Activated B cell treated with CpG ODN at 0.5 μM for 24 hours (primary cell): ENCODE measurements at regions of chr21 and their contacts with region 1.

Region 1: DNA sequence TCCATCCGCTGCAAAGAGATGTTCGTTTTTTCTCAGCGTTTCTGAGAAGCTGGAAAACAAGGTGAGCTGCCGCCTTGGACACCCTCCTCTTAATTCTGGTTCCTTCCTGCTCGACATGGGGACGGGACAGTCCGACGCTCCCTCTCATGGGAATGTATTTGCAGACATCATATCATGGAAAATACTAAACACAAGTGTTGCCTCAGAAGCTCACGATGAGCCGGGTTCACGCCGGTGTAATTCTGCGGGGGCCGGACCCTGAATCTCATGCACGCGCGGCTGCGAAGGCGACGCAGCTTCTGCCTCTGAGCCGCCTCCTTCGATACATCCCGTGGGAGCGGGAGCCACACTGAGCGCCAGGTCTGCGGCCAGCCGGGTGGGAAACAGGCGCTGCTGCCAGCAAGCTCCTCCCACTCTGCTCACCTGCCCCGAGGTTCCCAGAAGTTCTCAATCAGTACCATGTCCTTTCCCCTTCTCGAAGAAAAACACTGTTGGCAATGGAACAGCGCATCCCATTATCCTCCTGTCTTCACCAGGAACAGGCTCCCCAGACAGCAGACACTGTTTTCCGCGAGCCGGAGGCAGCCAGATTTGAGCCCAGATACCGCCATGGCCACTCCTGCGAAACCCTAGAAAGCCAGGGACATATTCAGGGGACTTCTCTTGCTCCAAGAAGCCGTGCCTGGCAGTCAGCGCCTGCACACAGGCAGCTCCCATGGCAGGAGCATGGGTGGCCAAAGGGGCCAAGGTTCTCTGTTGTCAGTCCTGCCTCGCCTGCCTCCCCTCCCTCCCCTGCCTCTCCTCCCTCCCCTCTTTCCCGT is 98.0 kb downstream of the WDR4 start:
- DNase-seq: no peak
- ATAC-seq: no peak
- H3K4me3 Mint-ChIP-seq: no peak overlapping the region
- H3K27ac Mint-ChIP-seq: no peak overlapping the region
- H3K4me1 Mint-ChIP-seq: peaks cover 51% of the 10 kb centered on the region
- H3K27me3 Mint-ChIP-seq: peaks cover 21% of the 10 kb centered on the region
- CTCF ChIP-seq: no peak

Region 2: DNA sequence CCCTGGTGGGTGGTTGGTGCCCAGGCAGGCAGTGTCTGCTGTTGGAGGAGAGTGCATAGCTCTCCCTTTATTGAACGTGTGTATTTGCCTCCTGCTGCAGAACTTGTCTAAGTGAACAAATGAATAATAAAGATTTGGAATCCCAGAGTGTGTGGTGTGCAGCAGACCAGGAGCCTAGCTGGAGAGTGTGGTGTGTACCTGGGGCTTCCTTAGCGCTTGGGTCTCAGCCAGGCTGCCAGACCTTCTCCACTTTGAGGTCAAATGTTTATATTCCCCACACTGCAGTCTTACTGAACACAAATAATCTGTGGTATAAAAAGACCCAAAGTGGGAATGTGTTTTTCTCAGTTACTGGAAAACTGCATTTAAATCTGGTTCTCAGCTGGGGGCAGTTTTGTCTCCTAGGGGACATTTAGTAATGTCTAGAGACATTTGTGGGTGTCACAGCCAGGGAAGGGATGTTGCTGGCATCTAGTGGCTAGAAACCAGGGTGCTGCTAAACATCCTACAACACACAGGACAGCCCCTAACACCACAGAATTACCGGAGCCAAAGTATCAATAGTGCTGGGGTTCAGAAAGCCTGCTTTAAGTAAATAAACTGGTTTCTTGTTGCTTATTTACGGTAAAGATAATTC is 244.1 kb before region 1 on chr21:
- CTCF ChIA-PET with region 1: no interaction called
- POLR2A ChIA-PET with region 1: no interaction called
- intact Hi-C with region 1: no loop called
- DNase-seq: no peak
- ATAC-seq: no peak
- H3K4me3 Mint-ChIP-seq: peak overlapping the region; percentile 24
- H3K27ac Mint-ChIP-seq: peak overlapping the region; percentile 90
- H3K4me1 Mint-ChIP-seq: peaks cover 56% of the 10 kb centered on the region
- H3K27me3 Mint-ChIP-seq: no peaks in the 10 kb centered on the region
- CTCF ChIP-seq: no peak

Region 3: DNA sequence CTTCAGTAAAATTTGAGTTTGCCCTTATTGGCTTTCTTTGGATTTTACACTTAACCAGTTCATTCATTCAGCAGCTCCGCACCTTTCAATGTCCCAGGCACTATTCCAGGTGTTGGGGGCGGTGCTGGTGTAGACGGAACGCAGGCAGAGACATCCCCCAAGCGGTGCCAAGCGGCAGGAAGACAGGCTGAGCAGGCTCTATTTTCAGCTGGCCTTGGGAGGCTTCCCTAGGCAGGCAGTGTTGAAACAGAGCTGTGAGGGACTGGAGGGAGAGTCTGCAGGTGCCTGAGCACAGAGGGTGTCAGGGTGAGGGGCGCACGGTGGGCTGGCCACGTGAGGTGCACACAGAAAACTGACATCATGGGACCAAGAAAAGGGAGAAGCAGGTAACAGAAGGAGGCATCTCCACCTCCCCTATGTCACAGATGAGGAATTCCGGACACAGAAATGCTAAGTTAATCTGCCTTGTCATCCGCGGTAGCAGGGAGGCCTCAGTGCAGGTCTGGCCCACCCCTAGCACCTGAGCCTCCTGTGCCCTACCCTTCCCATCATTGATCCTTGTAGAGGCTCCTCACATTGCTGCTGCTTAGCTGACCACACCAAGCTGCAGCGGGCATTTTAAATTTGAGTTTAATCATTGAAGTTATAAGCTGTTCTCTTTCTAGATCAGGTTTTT is 226.9 kb before region 1 on chr21:
- CTCF ChIA-PET with region 1: no interaction called
- POLR2A ChIA-PET with region 1: no interaction called
- intact Hi-C with region 1: no loop called
- DNase-seq: no peak
- ATAC-seq: no peak
- H3K4me3 Mint-ChIP-seq: no peak overlapping the region
- H3K27ac Mint-ChIP-seq: no peak overlapping the region
- H3K4me1 Mint-ChIP-seq: peaks cover 9% of the 10 kb centered on the region
- H3K27me3 Mint-ChIP-seq: no peaks in the 10 kb centered on the region
- CTCF ChIP-seq: no peak

Region 4: DNA sequence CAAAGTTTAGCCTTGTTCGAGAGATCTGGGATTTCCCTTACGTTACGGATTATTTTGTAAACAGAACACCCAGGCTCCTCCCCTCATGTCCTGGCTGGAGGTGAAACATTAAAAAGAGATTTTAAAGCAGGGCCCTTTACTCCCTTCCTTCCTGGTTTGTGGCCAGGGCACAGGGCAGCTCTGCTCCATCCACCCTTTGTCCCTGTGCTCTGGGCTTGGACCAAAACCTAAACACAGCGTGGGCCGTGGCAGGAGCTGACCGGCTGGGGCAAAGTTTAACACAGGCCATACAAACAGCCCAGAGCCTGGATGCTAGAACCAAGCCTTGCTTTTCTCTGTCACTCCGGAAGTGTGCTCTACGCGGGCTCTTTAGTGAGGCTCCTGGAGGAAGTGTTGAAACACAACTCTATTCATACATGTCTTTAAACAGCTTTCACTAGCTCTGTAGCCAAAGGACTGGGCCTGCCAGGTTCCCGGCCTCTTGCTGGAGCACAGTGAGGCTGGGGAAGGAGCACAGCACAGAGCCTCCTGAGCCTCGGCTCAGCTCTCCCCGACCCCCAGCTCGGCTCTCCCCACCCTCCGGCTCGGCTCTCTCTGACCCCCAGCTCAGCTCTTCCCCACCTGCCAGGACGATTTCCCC is 43.3 kb before region 1 on chr21:
- CTCF ChIA-PET with region 1: no interaction called
- POLR2A ChIA-PET with region 1: interaction called, 12 read pairs
- intact Hi-C with region 1: no loop called
- DNase-seq: peak; percentile 23
- ATAC-seq: peak; percentile 82
- H3K4me3 Mint-ChIP-seq: peak overlapping the region; percentile 70
- H3K27ac Mint-ChIP-seq: peak overlapping the region; percentile 93
- H3K4me1 Mint-ChIP-seq: peaks cover 15% of the 10 kb centered on the region
- H3K27me3 Mint-ChIP-seq: no peaks in the 10 kb centered on the region
- CTCF ChIP-seq: no peak

Region 5: GRCh38 chr21:42746593-42747275 is 34.6 kb before region 1 on chr21:
- CTCF ChIA-PET with region 1: no interaction called
- POLR2A ChIA-PET with region 1: interaction called, 3 read pairs
- intact Hi-C with region 1: loop called (anchors 5 kb)
- DNase-seq: no peak
- ATAC-seq: peak; percentile 58
- H3K4me3 Mint-ChIP-seq: peak overlapping the region; percentile 75
- H3K27ac Mint-ChIP-seq: peak overlapping the region; percentile 50
- H3K4me1 Mint-ChIP-seq: peaks cover 14% of the 10 kb centered on the region
- H3K27me3 Mint-ChIP-seq: no peaks in the 10 kb centered on the region
- CTCF ChIP-seq: no peak

Region 6: GRCh38 chr21:42799948-42800347 is 18.6 kb after region 1 on chr21:
- CTCF ChIA-PET with region 1: no interaction called
- POLR2A ChIA-PET with region 1: interaction called, 5 read pairs
- intact Hi-C with region 1: loop called (anchors 2 kb)
- DNase-seq: peak; percentile 44
- ATAC-seq: peak; percentile 97
- H3K4me3 Mint-ChIP-seq: peak overlapping the region; percentile 13
- H3K27ac Mint-ChIP-seq: peak overlapping the region; percentile 75
- H3K4me1 Mint-ChIP-seq: peaks cover 23% of the 10 kb centered on the region
- H3K27me3 Mint-ChIP-seq: peaks cover 3% of the 10 kb centered on the region
- CTCF ChIP-seq: no peak